RWPE1 (cell line): ENCODE measurements at regions of chr7 and their contacts with region 1.

Region 1: DNA sequence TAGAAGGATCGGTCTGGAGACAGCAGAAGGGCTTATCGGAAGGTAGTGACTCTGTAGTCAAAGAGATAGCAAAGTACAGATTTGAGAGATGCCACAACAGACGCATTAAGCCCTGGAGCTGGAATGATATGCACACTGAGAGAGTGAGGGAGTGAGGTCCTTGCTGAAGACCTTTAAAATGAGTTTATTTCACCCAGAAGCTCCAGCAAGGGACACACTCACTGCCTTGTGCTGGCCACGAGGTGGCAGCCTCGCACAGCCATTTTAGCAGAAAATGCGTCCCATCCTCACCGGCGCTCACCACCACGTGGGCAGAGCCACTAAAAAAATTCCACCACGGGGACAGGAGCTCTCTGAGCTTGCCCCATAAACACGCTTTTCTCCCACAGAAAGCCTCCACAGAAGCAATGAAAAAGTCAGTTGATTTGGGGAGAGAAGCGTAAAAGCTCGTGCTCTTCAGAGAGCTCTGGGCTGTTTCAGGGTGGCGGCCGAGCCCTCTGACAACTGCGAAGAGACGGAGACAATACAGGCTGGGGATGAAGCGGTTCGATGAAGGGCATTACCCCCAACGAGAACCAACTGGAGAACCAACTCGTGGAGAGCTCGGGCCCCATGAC is 163.0 kb upstream of the KLF14 start:
- DNase-seq: no peak
- H3K27ac ChIP-seq: peak overlapping the region; percentile 87
- CTCF ChIP-seq: peak; percentile 91

Region 2: GRCh38 chr7:130913632-130914553 is 16.9 kb after region 1 on chr7:
- CTCF ChIA-PET with region 1: interaction called, 11 read pairs
- POLR2A ChIA-PET with region 1: no interaction called
- DNase-seq: no peak
- H3K27ac ChIP-seq: peak overlapping the region; percentile 98
- CTCF ChIP-seq: no peak

Region 3: GRCh38 chr7:131040467-131040932 is 143.5 kb after region 1 on chr7:
- CTCF ChIA-PET with region 1: interaction called, 15 read pairs
- POLR2A ChIA-PET with region 1: no interaction called
- DNase-seq: peak; percentile 47
- H3K27ac ChIP-seq: no peak overlapping the region
- CTCF ChIP-seq: peak; percentile 97